Activated CD8-positive, alpha-beta memory T cell treated with anti-CD3 and anti-CD28 coated beads, Interleukin-2, amount 10 ng/mL, durations not matched to agents 7 days and 5 days (primary cell): ENCODE measurements at regions of chr4 and their contacts with region 1.

Region 1: GRCh38 chr4:184263910-184264732 is 46.4 kb upstream of the ENPP6 start:
- DNase-seq: peak; percentile 97
- ATAC-seq: peak; percentile 55
- H3K4me3 Mint-ChIP-seq: peak overlapping the region; percentile 8
- H3K27ac Mint-ChIP-seq: peak overlapping the region; percentile 65
- H3K4me1 Mint-ChIP-seq: peaks cover 55% of the 10 kb centered on the region
- H3K27me3 Mint-ChIP-seq: peaks cover 4% of the 10 kb centered on the region

Region 2: GRCh38 chr4:184188443-184189328 is 75.4 kb before region 1 on chr4:
- CTCF ChIA-PET with region 1: no interaction called
- DNase-seq: no peak
- ATAC-seq: no peak
- H3K4me3 Mint-ChIP-seq: no peak overlapping the region
- H3K27ac Mint-ChIP-seq: no peak overlapping the region
- H3K4me1 Mint-ChIP-seq: no peaks in the 10 kb centered on the region
- H3K27me3 Mint-ChIP-seq: peaks cover 29% of the 10 kb centered on the region

Region 3: DNA sequence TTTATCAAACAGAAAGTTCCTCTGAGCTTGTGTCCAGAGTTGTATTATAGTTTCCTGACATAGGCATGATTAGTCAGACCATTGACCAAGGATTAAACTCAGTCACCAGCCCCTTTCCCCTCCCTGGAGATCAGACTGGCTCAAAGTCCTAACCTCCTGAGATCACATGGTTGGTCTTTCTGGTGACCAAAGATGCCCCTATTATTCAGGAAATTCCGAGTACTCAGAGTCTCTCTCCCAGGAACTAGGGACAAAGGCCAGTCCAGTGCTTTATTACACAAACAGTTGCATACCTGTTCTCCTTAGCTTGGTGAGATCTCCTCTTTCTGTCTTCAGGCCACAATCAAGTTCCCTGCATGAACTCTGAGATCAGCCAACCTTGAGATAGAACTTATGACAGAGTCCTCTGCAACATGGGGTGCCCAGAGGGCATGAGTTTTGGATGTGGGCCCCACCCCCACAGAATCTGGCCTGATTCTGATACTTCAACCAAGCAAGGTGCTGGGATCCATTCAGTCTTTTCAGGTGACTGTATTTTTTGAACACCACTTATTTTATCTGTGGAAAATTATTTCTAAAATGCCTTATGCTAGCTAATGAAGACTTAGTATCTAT is 31.8 kb before region 1 on chr4:
- CTCF ChIA-PET with region 1: interaction called, 18 read pairs
- DNase-seq: no peak
- ATAC-seq: no peak
- H3K4me3 Mint-ChIP-seq: no peak overlapping the region
- H3K27ac Mint-ChIP-seq: no peak overlapping the region
- H3K4me1 Mint-ChIP-seq: peaks cover 83% of the 10 kb centered on the region
- H3K27me3 Mint-ChIP-seq: no peaks in the 10 kb centered on the region

Region 4: DNA sequence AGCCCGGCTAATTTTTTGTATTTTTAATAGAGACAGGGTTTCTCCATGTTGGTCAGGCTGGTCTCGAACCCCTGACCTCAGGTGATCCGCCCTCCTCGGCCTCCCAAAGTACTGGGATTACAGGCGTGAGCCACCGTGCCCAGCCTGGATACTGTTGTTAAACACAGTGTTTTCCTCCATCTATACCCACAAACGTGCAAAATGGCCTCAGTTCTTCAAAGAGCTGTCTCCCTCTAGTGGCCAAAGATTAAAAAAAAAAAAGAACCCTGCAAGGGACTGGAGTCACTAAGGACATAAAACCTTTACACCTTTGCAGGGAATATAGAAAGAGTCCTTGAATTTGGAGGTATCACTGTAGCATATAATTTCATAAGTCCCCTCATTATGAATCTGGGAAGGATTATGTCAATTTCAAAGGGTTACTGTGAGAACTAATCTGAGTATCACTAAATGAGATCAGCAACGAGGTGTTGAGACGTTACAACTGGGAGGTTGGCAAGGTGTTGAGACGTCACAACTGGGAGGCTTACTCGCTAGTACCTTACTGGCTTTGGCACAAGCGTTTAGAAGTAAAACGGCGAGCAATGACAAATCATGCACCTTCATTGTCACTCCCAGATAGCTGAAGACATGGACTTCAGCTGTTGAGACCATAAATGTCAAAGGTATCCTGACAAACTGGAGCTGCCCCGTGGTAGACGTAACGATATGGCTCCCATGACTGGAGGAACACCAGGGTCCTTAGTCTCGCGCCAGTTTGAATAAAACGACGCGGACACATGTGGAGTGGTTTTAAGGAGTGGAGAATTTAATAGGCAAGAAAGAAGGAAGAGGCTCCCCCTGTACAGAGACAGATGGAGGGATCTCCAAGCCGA is 13.1 kb before region 1 on chr4:
- CTCF ChIA-PET with region 1: interaction called, 36 read pairs
- DNase-seq: peak; percentile 53
- ATAC-seq: peak; percentile 88
- H3K4me3 Mint-ChIP-seq: no peak overlapping the region
- H3K27ac Mint-ChIP-seq: no peak overlapping the region
- H3K4me1 Mint-ChIP-seq: peaks cover 11% of the 10 kb centered on the region
- H3K27me3 Mint-ChIP-seq: peaks cover 4% of the 10 kb centered on the region

Region 5: GRCh38 chr4:184287697-184288255 is 23.7 kb after region 1 on chr4:
- CTCF ChIA-PET with region 1: interaction called, 153 read pairs
- DNase-seq: no peak
- ATAC-seq: peak; percentile 9
- H3K4me3 Mint-ChIP-seq: peak overlapping the region; percentile 3
- H3K27ac Mint-ChIP-seq: peak overlapping the region; percentile 85
- H3K4me1 Mint-ChIP-seq: peaks cover 57% of the 10 kb centered on the region
- H3K27me3 Mint-ChIP-seq: no peaks in the 10 kb centered on the region

Region 6: DNA sequence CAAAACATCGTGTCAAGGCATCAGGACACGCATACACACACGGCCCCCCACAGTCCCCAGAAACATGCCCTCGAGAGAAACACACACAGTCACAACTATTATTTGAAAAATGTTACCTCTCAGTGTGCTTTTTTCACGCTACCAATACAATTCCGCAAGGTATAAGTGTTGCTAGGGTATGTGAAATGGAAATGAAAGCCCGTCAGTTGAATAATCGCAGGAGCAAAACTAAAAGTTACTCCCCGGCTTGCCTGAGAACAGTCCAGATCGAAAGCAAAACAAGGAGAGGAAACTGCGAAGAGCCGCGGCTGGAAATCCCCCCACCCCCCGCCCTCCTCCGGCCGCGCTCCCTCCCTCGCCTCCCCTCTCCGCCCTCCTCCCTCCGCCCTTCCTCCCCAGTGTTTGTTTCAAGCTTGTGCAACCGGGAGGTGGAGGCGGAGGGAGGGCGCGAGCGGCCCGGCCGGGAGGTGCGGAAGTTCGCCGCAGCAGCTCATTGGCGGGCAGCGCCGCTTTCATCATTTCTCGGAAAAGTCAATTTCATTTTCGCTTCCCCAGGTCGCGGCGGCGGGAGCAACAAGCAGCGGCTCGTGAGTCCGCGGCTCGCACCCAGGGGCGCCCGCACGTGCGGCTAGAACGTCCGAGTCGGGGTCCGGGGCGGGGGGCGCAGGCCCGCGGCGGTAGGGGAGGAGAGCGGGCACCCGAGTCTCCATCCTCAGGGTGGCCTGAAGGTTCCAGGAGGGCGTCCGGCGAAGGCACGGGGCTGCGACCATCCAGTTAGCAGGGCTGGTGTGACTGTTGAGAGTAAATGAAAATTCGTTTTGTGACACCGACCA is 210.4 kb after region 1 on chr4 and contains the start of gene IRF2:
- CTCF ChIA-PET with region 1: interaction called, 10 read pairs
- DNase-seq: peak; percentile 99
- ATAC-seq: peak; percentile 80
- H3K4me3 Mint-ChIP-seq: peak within 1 kb of the TSS; percentile 98
- H3K27ac Mint-ChIP-seq: peak within 1 kb of the TSS; percentile 99
- H3K4me1 Mint-ChIP-seq: peaks cover 58% of the 10 kb centered on the region
- H3K27me3 Mint-ChIP-seq: no peaks in the 10 kb centered on the region
- total RNA-seq, gene IRF2: 81.6 to 112 TPM

Region 7: DNA sequence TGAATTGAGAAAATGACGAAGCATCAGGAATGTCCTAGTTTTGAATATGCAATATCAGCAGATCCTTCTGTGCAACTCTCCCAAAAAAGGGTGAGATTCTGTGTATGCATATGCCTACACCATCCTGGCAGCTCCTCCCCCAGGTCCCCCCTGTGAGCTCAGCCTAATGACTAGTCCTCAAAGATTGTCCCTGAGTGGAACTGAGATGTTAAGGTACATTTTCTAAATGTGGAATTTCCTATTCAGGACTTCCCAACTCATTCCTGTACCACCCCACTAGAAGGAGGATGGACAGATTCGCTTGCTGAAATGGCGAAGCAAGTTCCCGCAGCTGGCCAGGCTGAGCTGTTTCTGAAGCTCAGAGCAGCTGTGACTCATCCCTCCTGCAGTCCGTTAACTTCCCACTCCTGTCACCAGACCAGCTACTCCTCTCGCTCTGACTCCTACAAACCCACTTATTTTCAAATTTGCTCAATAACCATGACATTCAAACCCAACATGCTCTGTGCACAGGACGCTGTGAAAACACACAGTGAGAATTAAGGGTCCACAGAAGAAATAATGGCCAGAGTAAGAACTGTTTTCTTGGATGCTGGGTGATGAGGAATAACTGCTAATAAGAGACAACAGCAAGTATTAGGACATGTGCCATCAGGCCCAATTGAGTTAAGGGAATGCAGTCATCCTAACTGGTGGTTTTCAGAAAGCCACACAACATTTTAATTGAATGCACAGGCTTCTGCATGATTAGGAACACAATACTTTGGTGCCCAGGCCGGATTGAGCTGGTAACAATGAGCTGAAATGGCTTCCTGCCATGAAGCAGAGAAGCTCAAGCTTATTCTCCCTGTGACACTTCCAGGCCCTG is 250.2 kb after region 1 on chr4:
- CTCF ChIA-PET with region 1: interaction called, 12 read pairs
- DNase-seq: peak; percentile 92
- ATAC-seq: peak; percentile 95
- H3K4me3 Mint-ChIP-seq: peak overlapping the region; percentile 57
- H3K27ac Mint-ChIP-seq: peak overlapping the region; percentile 95
- H3K4me1 Mint-ChIP-seq: peaks cover 46% of the 10 kb centered on the region
- H3K27me3 Mint-ChIP-seq: no peaks in the 10 kb centered on the region

Region 8: GRCh38 chr4:184733654-184734524 is 469.8 kb after region 1 on chr4 and contains the start of gene CENPU:
- CTCF ChIA-PET with region 1: interaction called, 24 read pairs
- DNase-seq: peak; percentile 97
- ATAC-seq: peak; percentile 94
- H3K4me3 Mint-ChIP-seq: peak within 1 kb of the TSS; percentile 95
- H3K27ac Mint-ChIP-seq: peak within 1 kb of the TSS; percentile 92
- H3K4me1 Mint-ChIP-seq: peaks cover 43% of the 10 kb centered on the region
- H3K27me3 Mint-ChIP-seq: no peaks in the 10 kb centered on the region
- total RNA-seq, gene CENPU: 71.9 to 74.7 TPM